Right ventricle myocardium superior (tissue), 1 donor: ENCODE measurements at regions of chrX and their contacts with region 1.

Region 1: DNA sequence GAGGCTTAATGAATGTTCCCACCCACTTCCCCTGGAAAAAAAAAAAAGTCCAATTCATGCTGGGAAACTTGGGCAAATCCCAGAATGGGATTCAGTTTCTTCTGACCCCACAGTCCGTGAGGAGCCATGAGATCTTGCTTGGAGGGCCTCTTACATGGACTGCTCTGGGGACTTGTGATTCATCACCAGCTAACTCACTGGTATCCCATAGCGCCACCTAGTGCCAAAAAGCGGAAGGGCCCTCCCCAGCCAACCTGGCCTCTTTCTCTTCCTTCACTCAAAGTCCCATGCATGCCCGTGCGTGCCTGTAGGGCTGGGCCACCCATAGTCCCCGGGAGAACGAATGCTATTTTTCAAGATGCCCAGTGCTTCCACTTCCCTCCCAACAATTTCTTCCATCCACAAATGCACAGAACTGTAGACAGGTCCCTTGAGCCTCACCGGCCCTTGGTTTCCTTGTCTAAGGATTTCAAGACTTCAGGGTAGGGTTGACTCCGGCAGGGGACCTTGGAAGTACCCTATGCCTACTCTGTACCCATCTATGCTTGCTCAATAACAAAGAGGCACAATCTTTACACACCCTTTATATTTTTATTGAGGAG is 5.1 kb downstream of the RTL5 start:
- DNase-seq: peak; percentile 89
- ATAC-seq: peak; percentile 87

Region 2: DNA sequence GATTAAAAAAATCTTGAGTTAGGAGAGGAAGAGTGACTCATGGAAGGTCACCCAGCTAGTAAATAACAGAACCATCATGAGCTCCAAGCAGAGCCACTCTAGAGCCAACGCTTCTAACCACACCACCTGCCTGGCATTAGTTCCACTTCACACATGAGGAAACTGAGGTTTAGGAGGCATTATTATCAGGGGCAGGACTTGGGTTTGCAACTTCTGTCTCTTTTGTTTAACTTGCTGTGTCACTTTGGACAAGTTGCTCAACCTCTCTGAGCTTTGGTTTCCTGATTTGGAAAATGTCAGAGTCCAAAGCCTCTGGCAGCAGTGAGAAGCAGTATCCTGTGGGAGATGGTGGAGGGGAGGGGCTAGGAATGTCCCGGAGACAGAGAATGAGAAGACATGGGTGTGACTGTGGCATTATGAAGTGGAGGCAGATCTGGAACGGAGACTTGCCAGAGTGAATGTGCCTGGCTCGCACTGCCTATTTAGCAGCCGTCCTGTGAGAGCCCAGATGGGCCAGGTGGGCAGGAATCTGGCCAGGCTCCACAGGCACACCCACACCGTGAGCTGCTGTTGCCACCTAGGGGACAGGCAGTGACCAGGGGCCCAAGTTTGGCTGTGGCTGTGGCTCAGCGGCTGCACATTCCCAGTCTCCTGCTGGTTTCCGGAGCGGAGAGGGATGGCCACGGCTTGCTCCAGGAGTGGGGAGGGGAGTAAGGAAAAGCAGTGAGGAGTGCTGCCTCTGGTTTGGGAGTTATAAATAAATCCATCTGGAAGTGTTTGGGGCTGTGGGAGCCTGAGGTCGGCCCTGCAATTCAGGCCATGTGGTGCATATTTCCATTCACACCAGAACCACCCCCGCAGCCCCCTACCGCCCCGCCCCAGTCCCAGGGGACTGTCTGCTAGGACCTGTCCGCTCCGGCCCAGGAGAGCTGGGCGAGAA is 122.6 kb before region 1 on chrX:
- intact Hi-C with region 1: loop called (anchors 5 kb)
- DNase-seq: peak; percentile 54
- ATAC-seq: peak; percentile 82

Region 3: GRCh38 chrX:72018277-72019112 is 108.1 kb before region 1 on chrX:
- intact Hi-C with region 1: loop called (anchors 2 kb)
- DNase-seq: peak; percentile 91
- ATAC-seq: peak; percentile 98